ENCODE measurements at regions of chr4 and their contacts with region 1.

Region 1: GRCh38 chr4:174365018-174365587 is 81.4 kb downstream of the CEP44 start:
- DNase-seq: no peak
- CTCF ChIP-seq: peak; percentile 24

Region 2: GRCh38 chr4:174096999-174097398 is 268.1 kb before region 1 on chr4:
- in situ Hi-C with region 1: no loop called
- DNase-seq: no peak
- CTCF ChIP-seq: no peak

Region 3: DNA sequence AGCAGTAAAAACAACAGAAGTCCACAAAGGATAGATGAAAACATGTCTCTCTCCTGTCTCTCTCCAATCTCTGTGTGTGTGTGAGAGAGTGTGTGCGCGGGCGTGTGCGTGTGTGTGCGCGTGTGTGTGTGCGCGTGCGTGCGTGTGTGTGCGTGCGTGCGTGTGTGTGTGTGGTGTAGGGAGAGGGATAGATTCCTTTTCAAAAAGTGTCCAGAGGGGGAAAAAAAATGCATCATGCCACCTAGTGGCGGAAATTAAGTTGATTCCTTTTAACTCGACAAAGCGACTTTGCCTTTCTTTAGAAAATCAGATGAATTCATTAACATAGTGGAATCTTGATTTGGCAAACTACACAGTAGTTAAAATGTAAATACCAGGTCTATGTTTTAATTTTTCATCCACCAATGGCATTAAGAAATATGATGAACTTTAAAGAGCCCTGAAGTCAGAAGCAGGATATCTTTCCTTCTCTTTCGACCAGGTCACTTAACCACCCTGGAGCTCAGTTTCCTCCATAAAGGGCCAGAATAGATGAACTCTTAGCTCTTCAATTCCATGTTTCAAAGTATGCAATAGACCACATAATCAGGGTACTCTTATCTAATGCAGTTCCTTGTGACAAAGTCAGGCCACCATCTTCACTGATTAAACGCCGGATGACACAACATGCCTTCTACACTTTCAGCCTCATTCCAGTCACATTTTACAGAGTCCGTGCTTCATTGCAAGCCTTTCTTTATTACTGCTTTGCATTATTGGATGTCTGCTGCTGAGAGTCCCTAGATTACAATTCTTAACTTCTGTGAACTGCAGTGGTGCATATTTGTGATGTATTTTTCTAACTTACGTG is 244.4 kb before region 1 on chr4:
- in situ Hi-C with region 1: no loop called
- DNase-seq: peak; percentile 42
- CTCF ChIP-seq: peak; percentile 48

Region 4: DNA sequence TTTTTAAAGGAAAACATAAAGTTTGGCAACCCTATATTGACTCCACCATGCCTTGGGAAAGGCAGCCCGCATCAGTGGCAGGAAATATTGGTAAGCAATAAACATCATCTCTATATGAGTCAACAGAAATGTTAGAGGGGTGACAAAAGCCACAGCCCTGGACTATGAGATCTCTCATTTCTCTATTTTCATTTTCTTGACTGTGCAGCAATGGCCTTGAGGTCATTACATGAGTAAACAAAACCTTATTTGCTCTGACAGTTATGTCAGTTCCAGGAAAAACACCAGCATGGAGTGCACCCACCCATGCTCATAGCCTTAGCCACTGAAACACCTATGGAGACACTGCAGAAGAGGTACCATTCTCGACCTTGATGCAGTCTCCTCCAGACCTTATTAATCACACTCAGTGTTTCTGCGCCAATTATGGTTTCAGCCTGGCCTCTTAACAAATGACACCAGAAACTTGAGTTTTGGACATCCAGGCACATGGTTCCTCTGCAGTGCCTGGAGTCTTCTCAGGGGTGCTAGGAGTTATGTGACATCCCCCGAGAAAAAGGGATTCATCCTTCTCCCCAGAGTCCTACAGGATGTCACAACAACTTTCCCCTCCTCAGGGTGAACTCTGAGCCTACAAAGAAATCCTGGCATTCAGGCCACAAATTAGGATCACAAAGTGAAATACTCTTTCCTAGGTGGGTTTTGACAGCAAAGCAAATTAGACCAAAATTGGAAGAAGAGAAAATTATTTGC is 173.2 kb after region 1 on chr4:
- in situ Hi-C with region 1: no loop called
- DNase-seq: peak; percentile 18
- CTCF ChIP-seq: no peak

Region 5: DNA sequence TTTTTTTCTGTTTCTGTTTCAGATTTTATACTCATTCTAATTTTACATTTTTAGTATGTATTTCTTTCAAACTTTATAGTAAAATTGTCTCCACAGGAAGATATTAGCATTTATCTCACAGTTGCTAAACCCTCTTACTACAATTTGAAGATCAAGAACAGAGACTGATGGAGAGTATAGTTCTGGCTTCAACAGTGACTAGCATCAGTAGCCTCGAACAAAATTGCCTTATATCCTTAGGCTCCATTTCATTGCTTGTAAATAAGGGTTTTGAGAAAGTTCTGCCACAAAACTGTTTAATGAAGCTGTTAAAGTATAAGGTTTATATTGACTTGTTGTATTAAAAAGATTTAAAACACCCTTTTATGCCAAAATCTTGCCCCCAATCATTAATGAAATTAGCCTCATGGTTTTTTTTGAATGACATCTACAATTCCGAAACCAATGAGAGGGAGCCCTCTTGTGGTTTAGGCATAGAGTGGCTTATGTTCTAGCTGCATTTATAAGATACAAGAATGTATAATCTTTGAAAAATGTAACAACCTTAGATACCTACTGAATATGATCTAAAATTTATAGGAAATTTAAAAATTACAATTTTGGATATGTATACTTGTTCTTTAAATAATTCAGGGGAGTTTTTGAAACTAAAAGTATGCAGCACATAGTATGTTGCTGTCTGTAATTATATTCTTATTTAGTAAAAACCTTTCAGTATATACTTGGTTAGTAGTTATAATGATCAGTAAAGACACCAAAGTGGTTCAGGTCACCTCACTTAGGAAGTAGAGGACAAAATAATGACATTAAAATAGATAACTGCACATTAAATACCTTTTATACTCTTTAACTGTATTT is 267.0 kb after region 1 on chr4:
- in situ Hi-C with region 1: loop called (anchors 10 kb)
- DNase-seq: peak; percentile 27
- CTCF ChIP-seq: peak; percentile 54

Region 6: GRCh38 chr4:174714393-174715211 is 349.5 kb after region 1 on chr4:
- in situ Hi-C with region 1: loop called (anchors 10 kb)
- DNase-seq: peak; percentile 56
- CTCF ChIP-seq: peak; percentile 69